Activated CD8-positive, alpha-beta T cell treated with anti-CD3 and anti-CD28 coated beads, Interleukin-2, amount 10 ng/mL, durations not matched to agents 7 days and 5 days (primary cell): ENCODE measurements at regions of chr14 and their contacts with region 1.

Region 1: GRCh38 chr14:52299692-52300278 is 14.3 kb upstream of the PTGER2 start:
- DNase-seq: no peak
- ATAC-seq: peak; percentile 73
- H3K4me3 Mint-ChIP-seq: no peak overlapping the region
- H3K27ac Mint-ChIP-seq: no peak overlapping the region
- H3K4me1 Mint-ChIP-seq: peaks cover 60% of the 10 kb centered on the region
- H3K27me3 Mint-ChIP-seq: no peaks in the 10 kb centered on the region

Region 2: GRCh38 chr14:52220924-52221811 is 78.6 kb before region 1 on chr14:
- CTCF ChIA-PET with region 1: no interaction called
- POLR2A ChIA-PET with region 1: no interaction called
- DNase-seq: no peak
- ATAC-seq: peak; percentile 58
- H3K4me3 Mint-ChIP-seq: peak overlapping the region; percentile 75
- H3K27ac Mint-ChIP-seq: peak overlapping the region; percentile 92
- H3K4me1 Mint-ChIP-seq: peaks cover 9% of the 10 kb centered on the region
- H3K27me3 Mint-ChIP-seq: no peaks in the 10 kb centered on the region

Region 3: GRCh38 chr14:52272375-52272774 is 27.4 kb before region 1 on chr14:
- CTCF ChIA-PET with region 1: no interaction called
- POLR2A ChIA-PET with region 1: no interaction called
- DNase-seq: peak; percentile 65
- ATAC-seq: peak; percentile 20
- H3K4me3 Mint-ChIP-seq: no peak overlapping the region
- H3K27ac Mint-ChIP-seq: no peak overlapping the region
- H3K4me1 Mint-ChIP-seq: peaks cover 27% of the 10 kb centered on the region
- H3K27me3 Mint-ChIP-seq: peaks cover 54% of the 10 kb centered on the region

Region 4: GRCh38 chr14:52313903-52314594 is 14.3 kb after region 1 on chr14 and contains the start of gene PTGER2:
- CTCF ChIA-PET with region 1: interaction called, 29 read pairs
- POLR2A ChIA-PET with region 1: interaction called, 7 read pairs
- DNase-seq: peak; percentile 95
- ATAC-seq: peak; percentile 83
- H3K4me3 Mint-ChIP-seq: peak within 1 kb of the TSS; percentile 97
- H3K27ac Mint-ChIP-seq: peak within 1 kb of the TSS; percentile 98
- H3K4me1 Mint-ChIP-seq: peaks cover 55% of the 10 kb centered on the region
- H3K27me3 Mint-ChIP-seq: no peaks in the 10 kb centered on the region
- total RNA-seq, gene PTGER2: 116 to 119 TPM

Region 5: GRCh38 chr14:52473557-52473956 is 173.8 kb after region 1 on chr14:
- CTCF ChIA-PET with region 1: interaction called, 16 read pairs
- POLR2A ChIA-PET with region 1: no interaction called
- DNase-seq: no peak
- ATAC-seq: peak; percentile 44
- H3K4me3 Mint-ChIP-seq: no peak overlapping the region
- H3K27ac Mint-ChIP-seq: no peak overlapping the region
- H3K4me1 Mint-ChIP-seq: peaks cover 32% of the 10 kb centered on the region
- H3K27me3 Mint-ChIP-seq: no peaks in the 10 kb centered on the region

Region 6: DNA sequence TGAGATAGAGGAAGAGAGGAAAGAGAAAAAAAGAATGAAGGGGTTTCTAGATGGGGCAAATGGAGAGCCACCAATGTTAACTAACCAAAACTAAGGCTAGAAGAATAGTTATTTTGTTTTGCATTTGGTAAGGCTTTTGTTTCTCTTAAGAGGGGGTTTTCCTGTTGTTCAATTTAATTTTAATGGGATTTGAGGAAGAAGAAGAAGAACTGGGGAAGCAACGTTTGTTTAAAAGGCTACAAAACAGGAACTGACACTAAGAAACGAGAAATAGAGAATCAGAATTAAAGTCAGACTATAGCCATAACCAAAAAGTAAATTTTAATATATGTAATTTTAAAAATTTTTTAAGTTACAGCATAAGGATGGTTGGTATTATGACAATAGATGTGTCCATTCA is 238.8 kb after region 1 on chr14:
- CTCF ChIA-PET with region 1: no interaction called
- POLR2A ChIA-PET with region 1: no interaction called
- DNase-seq: no peak
- ATAC-seq: no peak
- H3K4me3 Mint-ChIP-seq: no peak overlapping the region
- H3K27ac Mint-ChIP-seq: no peak overlapping the region
- H3K4me1 Mint-ChIP-seq: peaks cover 14% of the 10 kb centered on the region
- H3K27me3 Mint-ChIP-seq: no peaks in the 10 kb centered on the region